Dendritic cell treated with granulocyte-macrophage colony-stimulating factor and Interleukin-4, amounts not matched to agents 40 ng/mL and 50 ng/mL, for 4 days (primary cell): ENCODE measurements at regions of chr20 and their contacts with region 1.

Region 1: GRCh38 chr20:20083807-20084206 is 31.5 kb downstream of the CFAP61 start:
- H3K4me3 Mint-ChIP-seq: no peak overlapping the region
- H3K27ac Mint-ChIP-seq: no peak overlapping the region
- H3K4me1 Mint-ChIP-seq: no peaks in the 10 kb centered on the region
- H3K27me3 Mint-ChIP-seq: peaks cover 10% of the 10 kb centered on the region

Region 2: GRCh38 chr20:20237093-20237959 is 153.5 kb after region 1 on chr20:
- intact Hi-C with region 1: loop called (anchors 5 kb)
- H3K4me3 Mint-ChIP-seq: no peak overlapping the region
- H3K27ac Mint-ChIP-seq: no peak overlapping the region
- H3K4me1 Mint-ChIP-seq: peaks cover 18% of the 10 kb centered on the region
- H3K27me3 Mint-ChIP-seq: peaks cover 7% of the 10 kb centered on the region

Region 3: DNA sequence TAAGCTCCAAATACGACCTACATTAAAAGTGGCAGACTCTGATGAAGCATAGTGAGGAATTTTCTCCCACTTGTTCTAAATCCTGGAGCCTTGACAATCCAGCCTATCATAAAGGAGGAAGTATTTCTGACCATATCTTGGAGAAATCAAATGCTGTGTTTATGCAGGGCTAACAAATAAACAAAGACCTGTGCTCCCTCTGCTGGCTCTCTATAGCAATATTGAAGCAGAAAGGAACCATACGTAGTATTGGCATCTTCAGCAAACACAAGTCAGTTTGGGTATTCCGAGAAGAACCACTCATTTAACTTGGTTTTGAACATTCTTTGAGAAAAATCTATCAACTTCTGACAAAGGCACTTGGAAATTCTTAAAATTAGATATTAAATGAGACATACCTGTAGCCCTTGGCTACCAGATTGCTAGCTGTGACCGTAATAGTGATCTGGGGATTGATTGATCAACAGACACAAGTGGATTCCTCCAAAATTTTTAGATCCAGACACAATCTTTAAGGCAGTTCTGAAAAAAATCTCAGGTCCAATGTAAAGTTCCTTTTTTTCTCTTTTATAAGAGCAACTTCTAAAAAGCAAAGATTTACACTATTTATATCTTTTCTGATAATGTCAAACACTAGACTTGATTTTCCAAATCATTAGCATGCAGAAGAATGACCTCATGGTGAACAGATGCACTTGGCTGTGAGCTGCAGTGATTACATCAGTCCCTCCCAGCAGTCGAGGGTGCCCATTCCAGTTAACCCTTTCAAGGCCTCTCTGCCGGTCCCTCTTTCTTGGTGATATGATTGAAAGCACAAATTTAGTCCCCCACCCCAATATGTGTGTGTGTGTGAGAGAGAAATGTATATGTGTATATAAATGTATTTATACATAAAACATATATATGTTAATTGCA is 324.3 kb after region 1 on chr20:
- intact Hi-C with region 1: loop called (anchors 1 kb)
- H3K4me3 Mint-ChIP-seq: no peak overlapping the region
- H3K27ac Mint-ChIP-seq: no peak overlapping the region
- H3K4me1 Mint-ChIP-seq: peaks cover 10% of the 10 kb centered on the region
- H3K27me3 Mint-ChIP-seq: no peaks in the 10 kb centered on the region

Region 4: GRCh38 chr20:20568604-20569205 is 484.9 kb after region 1 on chr20:
- intact Hi-C with region 1: loop called (anchors 1 kb)
- H3K4me3 Mint-ChIP-seq: no peak overlapping the region
- H3K27ac Mint-ChIP-seq: no peak overlapping the region
- H3K4me1 Mint-ChIP-seq: no peaks in the 10 kb centered on the region
- H3K27me3 Mint-ChIP-seq: no peaks in the 10 kb centered on the region

Region 5: DNA sequence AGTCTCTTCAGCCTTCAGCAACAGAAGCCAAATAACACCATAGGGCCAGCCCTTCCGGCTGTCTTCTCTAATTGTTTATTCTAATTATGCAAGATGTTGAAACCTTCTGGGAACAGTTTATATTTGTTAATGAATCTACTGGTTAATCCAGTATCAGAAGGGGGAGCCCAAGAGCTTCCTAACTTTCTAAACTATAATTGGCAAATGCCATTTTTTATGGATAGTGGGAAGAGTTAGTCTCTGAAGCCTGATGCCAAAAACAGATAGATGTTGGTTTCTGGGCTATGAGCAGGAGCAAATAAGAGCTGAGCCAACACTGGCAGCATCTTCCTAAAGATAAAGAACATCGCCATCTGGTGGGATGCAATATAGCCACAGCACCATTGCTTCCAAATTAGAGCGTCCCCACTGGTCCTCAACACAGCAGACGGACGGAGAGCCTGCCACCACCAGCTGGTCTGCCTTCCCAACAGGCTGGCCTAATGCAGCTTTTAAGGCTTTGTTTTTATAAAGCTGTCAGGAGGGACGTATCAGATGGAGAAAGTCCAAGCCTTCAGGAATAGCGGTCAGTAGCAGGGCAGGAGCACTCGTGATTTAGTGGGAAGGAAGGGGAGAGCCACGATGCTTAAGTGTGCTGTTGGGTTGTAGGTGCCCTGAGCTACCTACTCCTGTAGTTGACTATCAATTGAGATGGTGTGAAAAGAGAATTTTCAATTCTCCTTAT is 509.8 kb after region 1 on chr20:
- intact Hi-C with region 1: loop called (anchors 2 kb)
- H3K4me3 Mint-ChIP-seq: no peak overlapping the region
- H3K27ac Mint-ChIP-seq: no peak overlapping the region
- H3K4me1 Mint-ChIP-seq: no peaks in the 10 kb centered on the region
- H3K27me3 Mint-ChIP-seq: no peaks in the 10 kb centered on the region